ENCODE measurements at regions of chr19 and their contacts with region 1.

Region 1: DNA sequence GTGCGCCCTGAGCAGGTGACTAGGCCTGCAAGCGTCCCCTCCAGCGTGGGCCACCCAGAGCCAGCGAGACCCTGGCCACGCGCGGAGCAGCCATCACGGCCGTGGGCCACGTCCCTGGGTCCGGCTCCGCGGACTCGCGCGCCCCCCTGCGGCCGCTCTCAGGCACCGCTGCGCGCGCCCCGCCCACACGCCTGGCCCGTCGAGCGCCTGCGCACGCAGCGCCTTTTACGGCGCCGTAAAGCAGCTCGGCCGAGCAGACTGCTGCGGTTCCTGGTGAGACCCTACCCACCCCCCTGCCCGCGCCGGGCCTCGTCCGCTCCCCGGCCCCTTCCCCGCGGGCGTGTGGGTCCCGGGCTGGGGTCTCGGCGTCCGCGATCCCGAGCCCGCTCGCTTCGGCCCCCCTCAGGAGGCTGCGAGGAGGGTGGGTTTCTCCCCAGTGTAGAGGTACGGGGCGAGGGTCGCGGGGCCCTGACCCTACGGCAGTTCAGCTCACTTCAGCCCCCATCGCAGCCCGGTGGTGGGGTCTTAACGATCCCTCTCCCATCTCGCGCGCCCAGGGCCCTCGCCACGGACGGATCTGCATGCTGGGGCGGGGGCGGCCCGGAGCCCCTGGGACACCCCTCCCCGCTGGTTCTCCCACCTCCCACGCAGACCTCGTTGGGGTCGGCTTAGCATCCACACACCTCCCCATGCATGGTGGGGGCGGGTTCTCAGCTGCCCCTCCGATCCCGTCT is at the start of gene TRAPPC5:
- DNase-seq: peak; percentile 84 to 90
- ATAC-seq: peak; percentile 87 to 93 (median 88)
- H3K4me3 ChIP-seq: peak within 1 kb of the TSS; percentile 94 to 100 (median 100)
- H3K27ac ChIP-seq: peak within 1 kb of the TSS; percentile 33 to 99 (median 90)
- H3K4me1 ChIP-seq: peaks cover 0 to 37% (median 13%) of the 10 kb centered on the region in 9 donors
- H3K27me3 ChIP-seq: peaks cover 0 to 27% (median 15%) of the 10 kb centered on the region in 7 donors
- CTCF ChIP-seq: peak; percentile 86 to 100 (median 98)
- total RNA-seq, gene TRAPPC5: 75.3 to 132 (median 86.0) TPM

Region 2: DNA sequence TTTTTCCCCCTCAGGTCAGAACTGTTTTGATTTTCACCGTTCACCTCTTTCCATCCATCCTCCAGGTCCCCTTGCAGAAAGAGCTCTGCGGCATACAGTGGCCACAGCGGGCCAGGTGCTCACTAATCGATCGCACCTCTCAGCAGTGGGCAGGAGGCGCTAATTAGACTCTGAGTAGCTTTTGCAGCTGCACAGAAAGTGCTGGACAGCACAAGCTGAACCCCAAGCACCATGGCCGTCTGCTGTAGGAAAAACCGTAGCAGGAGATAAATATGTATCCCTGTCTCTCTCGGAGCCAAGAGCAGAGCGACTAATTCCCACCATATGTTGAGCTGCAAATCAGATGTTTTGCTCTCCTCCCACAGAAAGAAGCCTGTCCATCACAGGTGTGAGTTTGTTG is 246.4 kb before region 1 on chr19:
- intact Hi-C with region 1: loop called in 1 of 10 experiments (anchors 5 kb)
- DNase-seq: no peak
- ATAC-seq: no peak
- H3K4me3 ChIP-seq: no peak overlapping the region
- H3K27ac ChIP-seq: no peak overlapping the region
- H3K4me1 ChIP-seq: no peaks in the 10 kb centered on the region
- H3K27me3 ChIP-seq: no peaks in the 10 kb centered on the region
- CTCF ChIP-seq: no peak

Region 3: GRCh38 chr19:7562646-7563393 is 118.0 kb before region 1 on chr19:
- intact Hi-C with region 1: loop called (anchors 1 to 10 kb)
- DNase-seq: no peak
- ATAC-seq: no peak
- H3K4me3 ChIP-seq: no peak overlapping the region
- H3K27ac ChIP-seq: no peak overlapping the region
- H3K4me1 ChIP-seq: no peaks in the 10 kb centered on the region
- H3K27me3 ChIP-seq: no peaks in the 10 kb centered on the region
- CTCF ChIP-seq: no peak

Region 4: DNA sequence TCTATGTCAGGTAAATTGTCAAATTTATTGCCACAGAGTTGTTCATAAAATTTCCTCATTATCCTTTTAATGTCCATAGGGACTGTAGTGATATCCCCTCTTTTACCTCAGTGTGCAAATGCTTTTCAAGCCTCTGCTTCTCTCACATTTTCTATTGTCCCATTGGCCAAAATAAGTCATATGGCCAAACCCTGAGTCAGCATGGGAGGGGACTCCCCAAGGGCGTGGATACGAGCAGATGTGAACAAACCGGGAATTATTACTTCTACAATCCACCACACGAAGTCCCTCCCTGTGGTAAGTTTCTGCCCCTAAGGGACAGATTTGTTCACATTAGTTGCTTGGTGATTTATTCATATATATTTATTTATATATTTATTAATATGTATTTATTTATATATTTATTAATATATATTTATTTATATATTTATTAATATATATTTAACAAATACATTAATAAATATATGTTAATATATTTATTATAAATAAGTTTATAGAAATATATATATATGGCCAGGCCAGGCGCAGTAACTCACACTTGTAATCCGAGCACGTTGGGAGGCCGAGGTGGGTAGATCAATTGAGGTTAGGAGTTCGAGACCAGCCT is 105.2 kb before region 1 on chr19:
- intact Hi-C with region 1: no loop called
- DNase-seq: no peak
- ATAC-seq: no peak
- H3K4me3 ChIP-seq: no peak overlapping the region
- H3K27ac ChIP-seq: no peak overlapping the region
- H3K4me1 ChIP-seq: no peaks in the 10 kb centered on the region
- H3K27me3 ChIP-seq: peaks cover 0 to 11% (median 0%) of the 10 kb centered on the region in 7 donors
- CTCF ChIP-seq: no peak

Region 5: GRCh38 chr19:7629347-7630054 is 51.3 kb before region 1 on chr19 and contains the starts of genes PET100 and XAB2:
- intact Hi-C with region 1: loop called in 1 of 10 experiments (anchors 2 kb)
- DNase-seq: peak; percentile 91 to 98
- ATAC-seq: peak; percentile 96 to 99 (median 98)
- H3K4me3 ChIP-seq: peak within 1 kb of the TSS; percentile 71 to 95 (median 88)
- H3K27ac ChIP-seq: peak within 1 kb of the TSS in 9 of 10 donors; percentile 54 to 89 (median 76)
- H3K4me1 ChIP-seq: peaks cover 11 to 39% (median 30%) of the 10 kb centered on the region in 9 donors
- H3K27me3 ChIP-seq: no peaks in the 10 kb centered on the region
- CTCF ChIP-seq: no peak
- total RNA-seq, gene PET100: 119 to 230 (median 150) TPM
- total RNA-seq, gene XAB2: 18.6 to 25.1 (median 22.4) TPM

Region 6: DNA sequence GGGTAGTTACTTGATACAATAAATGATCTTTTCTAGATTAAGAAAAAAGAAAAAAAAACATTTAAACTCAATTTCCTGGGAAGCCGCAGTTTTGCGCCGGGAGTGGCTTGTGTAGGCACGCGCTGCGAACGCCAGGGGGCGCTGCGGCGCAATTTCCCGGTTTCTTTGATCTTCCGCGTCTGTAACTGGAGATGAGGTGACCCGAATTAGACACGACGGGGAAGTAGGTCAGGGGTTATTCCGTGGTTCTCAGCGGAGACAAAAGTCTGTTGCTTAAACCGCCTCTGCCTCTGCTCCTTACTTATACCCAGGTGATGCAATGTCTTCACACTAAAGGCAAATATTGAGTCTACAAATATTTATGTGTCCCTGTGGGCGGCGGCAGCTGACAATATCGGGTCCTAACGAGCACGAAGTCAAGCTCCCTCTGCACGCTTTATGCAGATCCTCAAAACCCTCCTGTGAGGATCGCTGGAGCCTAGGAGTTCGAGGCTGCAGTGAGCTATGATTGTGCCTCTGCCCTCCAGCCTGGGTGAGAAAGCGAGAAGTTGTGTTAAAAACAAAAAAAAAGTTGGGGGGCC is 28.6 kb before region 1 on chr19:
- intact Hi-C with region 1: loop called in 5 of 10 experiments (anchors 1 to 2 kb)
- DNase-seq: peak; percentile 72 to 85
- ATAC-seq: peak; percentile 78 to 92 (median 90)
- H3K4me3 ChIP-seq: peak overlapping the region in 8 of 10 donors; percentile 8 to 47 (median 30)
- H3K27ac ChIP-seq: peak overlapping the region in 2 of 10 donors; percentile 35 to 74
- H3K4me1 ChIP-seq: peaks cover 0 to 23% (median 0%) of the 10 kb centered on the region in 9 donors
- H3K27me3 ChIP-seq: peaks cover 0 to 24% (median under 1%) of the 10 kb centered on the region in 7 donors
- CTCF ChIP-seq: peak; percentile 93 to 99 (median 98)